ENCODE measurements at regions of chr16 and their contacts with region 1.

Region 1: GRCh38 chr16:20383106-20384029 is 21.2 kb downstream of the PDILT start:
- DNase-seq: peak in 7 of 9 donors; percentile 3 to 54 (median 37)
- ATAC-seq: peak; percentile 67
- H3K4me3 ChIP-seq: no peak overlapping the region
- H3K4me3 Mint-ChIP-seq: peak overlapping the region in 1 of 10 donors; percentile 22
- H3K27ac ChIP-seq: no peak overlapping the region
- H3K27ac Mint-ChIP-seq: no peak overlapping the region
- H3K4me1 ChIP-seq: peaks cover 0 to 4% of the 10 kb centered on the region in 2 donors
- H3K4me1 Mint-ChIP-seq: peaks cover 0 to 6% (median 0%) of the 10 kb centered on the region in 7 donors
- H3K27me3 ChIP-seq: no peaks in the 10 kb centered on the region
- H3K27me3 Mint-ChIP-seq: peaks cover 11 to 29% (median 19%) of the 10 kb centered on the region in 5 donors

Region 2: DNA sequence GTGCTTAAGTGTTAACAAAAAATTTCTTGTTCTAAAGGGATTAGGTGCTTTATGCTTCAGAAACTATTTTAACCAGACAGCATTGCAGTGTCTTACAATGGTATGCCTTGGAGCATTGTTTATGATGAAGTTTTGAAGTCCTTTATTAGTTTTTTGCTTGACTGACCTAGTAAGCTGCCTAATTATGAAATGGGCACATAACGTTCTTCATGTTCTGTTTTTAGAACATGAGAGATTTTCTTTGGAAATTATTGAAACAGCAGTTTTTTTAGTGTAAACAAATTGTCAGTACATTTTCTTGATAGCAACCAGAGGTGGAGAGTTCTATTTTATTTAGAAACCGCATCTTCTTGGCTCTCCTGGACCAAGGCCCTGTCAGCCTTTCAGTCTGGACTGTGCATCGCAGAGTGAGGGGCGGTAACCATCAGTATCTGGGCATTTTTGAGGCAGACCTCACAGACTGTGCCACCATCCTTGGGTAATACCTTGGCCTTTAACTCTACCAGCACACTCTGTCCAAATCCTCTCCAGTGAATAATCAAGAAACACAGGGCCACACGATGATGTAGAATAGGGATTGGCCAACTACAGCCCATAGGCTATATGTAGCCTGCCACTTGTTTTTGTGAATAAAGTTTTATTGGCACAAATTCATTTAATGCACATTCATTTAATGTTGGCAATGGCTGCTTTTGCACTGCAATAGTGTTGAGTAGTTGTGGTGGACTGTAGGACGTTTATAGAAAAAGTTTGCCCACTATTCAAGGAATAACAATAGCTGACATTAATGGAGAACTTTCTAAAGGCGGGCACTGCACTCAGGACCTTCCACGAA is 746.7 kb before region 1 on chr16:
- CTCF ChIA-PET with region 1: no interaction called
- POLR2A ChIA-PET with region 1: no interaction called
- intact Hi-C with region 1: no loop called
- DNase-seq: no peak
- ATAC-seq: no peak
- H3K4me3 ChIP-seq: no peak overlapping the region
- H3K4me3 Mint-ChIP-seq: no peak overlapping the region
- H3K27ac ChIP-seq: no peak overlapping the region
- H3K27ac Mint-ChIP-seq: peak overlapping the region in 3 of 9 donors; percentile 20 to 66 (median 45)
- H3K4me1 ChIP-seq: peaks cover 0 to 12% of the 10 kb centered on the region in 2 donors
- H3K4me1 Mint-ChIP-seq: peaks cover 9 to 25% (median 13%) of the 10 kb centered on the region in 7 donors
- H3K27me3 ChIP-seq: no peaks in the 10 kb centered on the region
- H3K27me3 Mint-ChIP-seq: no peaks in the 10 kb centered on the region

Region 3: DNA sequence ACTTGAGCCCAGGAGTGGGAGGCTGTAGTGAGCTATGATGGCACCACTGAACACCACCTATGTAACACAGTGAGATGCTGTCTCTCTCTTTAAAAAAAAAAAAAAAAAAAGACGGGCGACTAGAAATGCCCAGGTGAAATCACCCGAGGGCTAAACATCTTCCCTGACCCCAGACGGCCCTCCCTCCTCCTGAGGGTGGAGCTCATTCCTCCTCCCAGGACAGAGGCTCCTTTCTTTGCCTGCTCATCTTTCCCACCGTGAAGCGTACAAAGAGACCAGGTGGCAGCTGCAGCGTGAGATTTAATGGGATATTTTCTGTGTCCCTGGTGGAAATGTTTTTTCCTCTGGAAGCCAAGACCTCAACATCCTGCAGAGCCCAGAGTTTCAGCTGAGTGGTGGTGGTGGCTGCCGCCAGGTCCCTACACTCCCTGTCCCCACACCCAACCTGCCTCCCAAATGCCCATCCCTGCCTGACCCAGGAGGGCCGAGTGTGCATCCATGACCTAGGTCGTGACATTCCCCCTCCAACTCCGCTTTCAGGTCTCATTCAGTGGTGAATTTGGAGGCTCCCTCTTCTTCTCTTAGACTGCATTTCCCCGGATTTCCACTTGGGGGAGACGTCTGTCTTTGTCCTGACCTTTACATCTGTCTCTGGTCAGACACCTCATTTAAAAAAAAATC is 484.3 kb before region 1 on chr16:
- CTCF ChIA-PET with region 1: no interaction called
- POLR2A ChIA-PET with region 1: no interaction called
- intact Hi-C with region 1: loop called in 1 of 2 experiments (anchors 2 kb)
- DNase-seq: peak in 5 of 9 donors; percentile 14 to 29 (median 17)
- ATAC-seq: peak; percentile 54
- H3K4me3 ChIP-seq: no peak overlapping the region
- H3K4me3 Mint-ChIP-seq: no peak overlapping the region
- H3K27ac ChIP-seq: no peak overlapping the region
- H3K27ac Mint-ChIP-seq: no peak overlapping the region
- H3K4me1 ChIP-seq: no peaks in the 10 kb centered on the region
- H3K4me1 Mint-ChIP-seq: peaks cover 0 to 5% (median 2%) of the 10 kb centered on the region in 7 donors
- H3K27me3 ChIP-seq: no peaks in the 10 kb centered on the region
- H3K27me3 Mint-ChIP-seq: peaks cover 4 to 9% (median 6%) of the 10 kb centered on the region in 5 donors

Region 4: GRCh38 chr16:20323677-20324076 is 59.7 kb before region 1 on chr16:
- CTCF ChIA-PET with region 1: no interaction called
- POLR2A ChIA-PET with region 1: no interaction called
- intact Hi-C with region 1: no loop called
- DNase-seq: no peak
- ATAC-seq: no peak
- H3K4me3 ChIP-seq: no peak overlapping the region
- H3K4me3 Mint-ChIP-seq: no peak overlapping the region
- H3K27ac ChIP-seq: no peak overlapping the region
- H3K27ac Mint-ChIP-seq: no peak overlapping the region
- H3K4me1 ChIP-seq: no peaks in the 10 kb centered on the region
- H3K4me1 Mint-ChIP-seq: no peaks in the 10 kb centered on the region
- H3K27me3 ChIP-seq: no peaks in the 10 kb centered on the region
- H3K27me3 Mint-ChIP-seq: peaks cover 0 to 16% (median 10%) of the 10 kb centered on the region in 5 donors

Region 5: DNA sequence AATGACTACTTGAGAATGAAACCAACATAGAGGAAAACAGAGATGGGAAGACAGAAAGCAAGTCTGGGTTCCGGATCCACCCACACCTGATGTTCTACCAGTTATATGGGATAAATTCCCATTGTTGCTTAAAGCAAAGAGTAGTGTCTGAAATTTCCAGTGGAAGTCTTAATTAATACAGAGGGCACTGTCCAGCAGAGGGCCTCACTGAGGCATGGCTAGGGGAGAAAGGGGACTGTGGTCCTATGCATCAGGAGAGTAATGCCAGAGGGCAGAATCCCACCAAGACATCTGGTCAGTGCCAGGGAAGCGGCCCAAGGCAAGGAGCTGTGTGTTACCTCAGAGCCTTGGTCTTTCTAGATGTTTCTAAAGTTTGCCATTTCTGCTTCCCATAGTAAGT is 23.4 kb before region 1 on chr16:
- CTCF ChIA-PET with region 1: no interaction called
- POLR2A ChIA-PET with region 1: no interaction called
- intact Hi-C with region 1: no loop called
- DNase-seq: no peak
- ATAC-seq: no peak
- H3K4me3 ChIP-seq: no peak overlapping the region
- H3K4me3 Mint-ChIP-seq: no peak overlapping the region
- H3K27ac ChIP-seq: no peak overlapping the region
- H3K27ac Mint-ChIP-seq: no peak overlapping the region
- H3K4me1 ChIP-seq: no peaks in the 10 kb centered on the region
- H3K4me1 Mint-ChIP-seq: no peaks in the 10 kb centered on the region
- H3K27me3 ChIP-seq: peaks cover 0 to 3% of the 10 kb centered on the region in 2 donors
- H3K27me3 Mint-ChIP-seq: peaks cover 0 to 48% (median 23%) of the 10 kb centered on the region in 5 donors

Region 6: GRCh38 chr16:20409398-20410120 is 26.2 kb after region 1 on chr16 and contains the start of gene ACSM5:
- CTCF ChIA-PET with region 1: no interaction called
- POLR2A ChIA-PET with region 1: no interaction called
- intact Hi-C with region 1: no loop called
- DNase-seq: no peak
- ATAC-seq: peak; percentile 38
- H3K4me3 ChIP-seq: no peak within 1 kb of the TSS
- H3K4me3 Mint-ChIP-seq: no peak within 1 kb of the TSS
- H3K27ac ChIP-seq: no peak within 1 kb of the TSS
- H3K27ac Mint-ChIP-seq: no peak within 1 kb of the TSS
- H3K4me1 ChIP-seq: no peaks in the 10 kb centered on the region
- H3K4me1 Mint-ChIP-seq: no peaks in the 10 kb centered on the region
- H3K27me3 ChIP-seq: no peaks in the 10 kb centered on the region
- H3K27me3 Mint-ChIP-seq: peaks cover 0 to 17% (median 4%) of the 10 kb centered on the region in 5 donors
- total RNA-seq, gene ACSM5: not detected

Measured in naive thymus-derived CD4-positive, alpha-beta T cell (primary cell).